Mammary epithelial cell (primary cell): ENCODE measurements at regions of chr6 and their contacts with region 1.

Region 1: DNA sequence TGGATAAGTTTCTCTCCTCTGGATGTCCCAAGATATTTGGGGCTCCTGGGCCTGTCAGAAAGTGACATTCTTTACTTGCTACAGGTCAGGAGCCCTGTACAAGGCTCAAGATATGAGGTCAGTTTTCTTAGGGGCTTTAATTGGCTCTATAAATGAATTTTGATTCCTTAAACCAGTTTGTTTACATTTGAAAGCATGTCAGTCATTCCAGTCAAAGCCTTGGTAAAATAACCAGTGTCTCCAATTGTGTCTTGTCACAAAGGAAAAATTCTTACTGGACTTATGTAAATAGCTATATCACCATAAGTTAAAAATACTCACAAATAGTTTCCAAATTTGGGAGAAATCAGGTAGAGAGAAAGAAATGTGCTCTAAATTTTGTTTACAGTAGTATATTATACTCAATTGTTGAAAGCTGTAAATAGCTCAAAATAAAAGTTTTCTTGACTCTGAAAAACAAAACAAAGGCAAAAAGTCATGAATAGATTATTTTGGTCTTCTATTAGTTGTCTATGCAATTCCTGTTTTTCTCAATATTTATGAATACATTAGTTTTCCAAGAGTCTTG is 22.9 kb downstream of the RNF182 start:
- DNase-seq: no peak
- H3K4me3 ChIP-seq: no peak overlapping the region
- H3K27ac ChIP-seq: no peak overlapping the region
- H3K4me1 ChIP-seq: peaks cover 7% of the 10 kb centered on the region
- H3K27me3 ChIP-seq: no peaks in the 10 kb centered on the region
- CTCF ChIP-seq: no peak

Region 2: DNA sequence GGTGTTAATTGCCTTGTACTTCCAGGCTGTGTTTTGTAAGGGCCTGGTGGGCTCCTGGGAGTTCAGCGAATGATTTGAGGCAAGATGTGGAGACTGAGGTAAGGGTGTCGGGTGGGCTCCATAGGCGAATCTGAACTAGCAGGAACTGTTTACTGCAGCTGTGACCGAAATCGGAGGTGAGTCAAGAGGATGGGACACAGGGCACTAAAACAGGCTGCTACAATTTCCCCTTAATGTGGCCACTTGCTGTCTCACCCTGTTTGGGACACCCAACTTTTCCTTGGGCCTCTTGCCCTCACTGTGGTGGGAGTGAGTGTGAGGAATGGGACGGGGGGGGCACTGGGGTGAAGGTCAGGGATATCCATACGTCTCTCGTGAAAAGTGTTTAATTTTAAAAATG is 79.5 kb before region 1 on chr6:
- CTCF ChIA-PET with region 1: no interaction called
- dilution Hi-C with region 1: no loop called
- in situ Hi-C with region 1: no loop called
- intact Hi-C with region 1: loop called (anchors 2 kb)
- DNase-seq: no peak
- H3K4me3 ChIP-seq: no peak overlapping the region
- H3K27ac ChIP-seq: no peak overlapping the region
- H3K4me1 ChIP-seq: peaks cover 1% of the 10 kb centered on the region
- H3K27me3 ChIP-seq: peaks cover 5% of the 10 kb centered on the region
- CTCF ChIP-seq: no peak

Region 3: GRCh38 chr6:13924146-13924948 is 23.3 kb before region 1 on chr6:
- CTCF ChIA-PET with region 1: no interaction called
- dilution Hi-C with region 1: no loop called
- in situ Hi-C with region 1: no loop called
- intact Hi-C with region 1: no loop called
- DNase-seq: no peak
- H3K4me3 ChIP-seq: peak overlapping the region; percentile 43 to 46 (median 44)
- H3K27ac ChIP-seq: no peak overlapping the region
- H3K4me1 ChIP-seq: peaks cover 5% of the 10 kb centered on the region
- H3K27me3 ChIP-seq: peaks cover 26% of the 10 kb centered on the region
- CTCF ChIP-seq: no peak